Astrocyte of the cerebellum (primary cell): ENCODE measurements at regions of chr16 and their contacts with region 1.

Region 1: DNA sequence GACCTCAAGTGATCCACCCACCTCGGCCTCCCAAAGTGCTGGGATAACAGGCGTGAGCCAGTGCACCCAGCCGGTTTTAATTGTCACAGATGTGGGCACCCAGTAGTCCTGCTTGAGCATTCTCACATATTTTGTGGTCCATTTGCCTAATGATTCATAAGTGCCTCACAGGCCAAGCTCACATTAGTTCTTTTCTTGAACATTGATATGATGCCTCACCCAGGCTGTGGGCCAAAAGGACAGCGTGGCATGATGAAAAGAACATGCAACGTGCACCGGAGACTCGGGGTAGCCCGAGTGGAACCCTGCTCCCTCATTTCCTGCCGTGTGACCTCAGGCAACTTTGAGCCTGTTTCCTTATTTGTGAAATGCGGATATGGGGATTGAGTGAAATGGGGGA is 181.9 kb downstream of the SNX29 start:
- DNase-seq: peak; percentile 85
- H3K4me3 ChIP-seq: no peak overlapping the region
- CTCF ChIP-seq: no peak

Region 2: DNA sequence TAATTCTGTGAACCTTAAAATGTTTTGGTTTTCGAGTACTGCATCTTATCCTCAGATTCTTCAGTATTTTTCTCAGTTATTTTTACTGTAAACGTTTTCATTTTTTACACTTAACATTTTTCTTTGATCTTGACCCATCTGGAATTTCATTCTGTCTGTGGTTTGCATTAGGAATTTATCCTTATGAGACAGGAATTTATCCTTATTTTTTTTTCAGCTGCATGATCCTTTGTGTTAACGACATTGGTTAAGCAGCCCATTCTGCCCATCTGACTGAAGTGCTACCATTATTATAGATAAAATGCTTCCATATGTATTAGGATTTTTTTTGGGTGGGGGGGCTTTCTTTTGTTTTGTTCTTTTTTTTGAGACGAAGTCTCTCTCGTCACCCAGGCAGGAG is 140.9 kb before region 1 on chr16:
- in situ Hi-C with region 1: no loop called
- DNase-seq: peak; percentile 66
- H3K4me3 ChIP-seq: no peak overlapping the region
- CTCF ChIP-seq: no peak

Region 3: DNA sequence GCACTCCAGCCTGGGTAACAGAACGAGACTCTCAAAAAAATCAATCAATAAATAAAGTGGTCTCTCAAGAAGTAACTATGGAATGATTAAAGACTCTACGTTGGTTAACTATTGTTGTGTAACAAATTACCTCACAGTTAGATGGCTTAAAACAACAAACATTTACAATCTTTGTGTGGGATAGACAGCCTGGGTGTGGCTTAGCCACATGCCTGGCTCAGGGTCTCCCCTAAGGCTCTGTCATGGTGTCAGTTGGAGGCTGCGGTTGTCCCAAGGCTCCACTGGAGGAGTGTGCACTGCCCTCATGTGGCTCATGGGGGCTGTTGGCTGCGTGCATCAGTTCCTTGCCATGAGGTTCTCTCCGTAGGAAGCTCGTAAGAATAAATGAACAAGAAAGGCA is 112.6 kb after region 1 on chr16:
- in situ Hi-C with region 1: loop called (anchors 25 kb)
- DNase-seq: no peak
- H3K4me3 ChIP-seq: no peak overlapping the region
- CTCF ChIP-seq: peak; percentile 57